HEK293 (cell line): ENCODE measurements at regions of chr11 and their contacts with region 1.

Region 1: GRCh38 chr11:65593518-65594298 is 1.9 kb downstream of the KCNK7 start:
- H3K4me3 ChIP-seq: no peak overlapping the region
- H3K27ac ChIP-seq: no peak overlapping the region
- H3K4me1 ChIP-seq: no peaks in the 10 kb centered on the region
- CTCF ChIP-seq: peak; percentile 68

Region 2: DNA sequence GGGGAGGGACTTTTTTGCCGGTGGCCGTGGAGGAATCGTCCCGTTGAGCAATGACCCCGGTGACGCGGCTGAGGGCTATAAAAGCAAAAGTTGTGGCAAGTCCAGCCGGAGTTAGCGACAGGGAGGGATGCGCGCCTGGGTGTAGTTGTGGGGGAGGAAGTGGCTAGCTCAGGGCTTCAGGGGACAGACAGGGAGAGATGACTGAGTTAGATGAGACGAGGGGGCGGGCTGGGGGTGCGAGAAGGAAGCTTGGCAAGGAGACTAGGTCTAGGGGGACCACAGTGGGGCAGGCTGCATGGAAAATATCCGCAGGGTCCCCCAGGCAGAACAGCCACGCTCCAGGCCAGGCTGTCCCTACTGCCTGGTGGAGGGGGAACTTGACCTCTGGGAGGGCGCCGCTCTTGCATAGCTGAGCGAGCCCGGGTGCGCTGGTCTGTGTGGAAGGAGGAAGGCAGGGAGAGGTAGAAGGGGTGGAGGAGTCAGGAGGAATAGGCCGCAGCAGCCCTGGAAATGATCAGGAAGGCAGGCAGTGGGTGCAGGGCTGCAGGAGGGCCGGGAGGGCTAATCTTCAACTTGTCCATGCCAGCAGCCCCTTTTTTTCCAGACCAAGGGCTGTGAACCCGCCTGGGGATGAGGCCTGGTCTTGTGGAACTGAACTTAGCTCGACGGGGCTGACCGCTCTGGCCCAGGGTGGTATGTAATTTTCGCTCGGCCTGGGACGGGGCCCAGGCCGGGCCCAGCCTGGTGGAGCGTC is 170.8 kb before region 1 on chr11 and contains the start of gene NEAT1:
- CTCF ChIA-PET with region 1: no interaction called
- POLR2A ChIA-PET with region 1: no interaction called
- H3K4me3 ChIP-seq: peak within 1 kb of the TSS; percentile 70
- H3K27ac ChIP-seq: peak within 1 kb of the TSS; percentile 98
- H3K4me1 ChIP-seq: peaks cover 6% of the 10 kb centered on the region; the same call in 1 of the 2 replicates
- CTCF ChIP-seq: peak; percentile 71

Region 3: GRCh38 chr11:65524741-65525545 is 68.8 kb before region 1 on chr11 and contains the start of gene SCYL1:
- CTCF ChIA-PET with region 1: interaction called, 11 read pairs
- POLR2A ChIA-PET with region 1: no interaction called
- H3K4me3 ChIP-seq: peak within 1 kb of the TSS; percentile 82
- H3K27ac ChIP-seq: peak within 1 kb of the TSS; percentile 81
- H3K4me1 ChIP-seq: peaks cover 4% of the 10 kb centered on the region; the same call in 1 of the 2 replicates
- CTCF ChIP-seq: no peak

Region 4: GRCh38 chr11:65558002-65558931 is 35.4 kb before region 1 on chr11 and contains the start of gene LTBP3:
- CTCF ChIA-PET with region 1: interaction called, 10 read pairs
- POLR2A ChIA-PET with region 1: no interaction called
- H3K4me3 ChIP-seq: peak within 1 kb of the TSS; percentile 52
- H3K27ac ChIP-seq: peak within 1 kb of the TSS; percentile 81
- H3K4me1 ChIP-seq: peaks cover 19% of the 10 kb centered on the region
- CTCF ChIP-seq: no peak

Region 5: GRCh38 chr11:65569973-65570918 is 23.5 kb before region 1 on chr11 and contains the start of gene ZNRD2:
- CTCF ChIA-PET with region 1: interaction called, 28 read pairs
- POLR2A ChIA-PET with region 1: interaction called, 9 read pairs
- H3K4me3 ChIP-seq: peak within 1 kb of the TSS; percentile 74
- H3K27ac ChIP-seq: peak within 1 kb of the TSS; percentile 93
- H3K4me1 ChIP-seq: peaks cover 16% of the 10 kb centered on the region; the same call in 1 of the 2 replicates
- CTCF ChIP-seq: peak; percentile 92

Region 6: GRCh38 chr11:65575568-65576231 is 18.0 kb before region 1 on chr11 and contains the start of gene EHBP1L1:
- CTCF ChIA-PET with region 1: interaction called, 28 read pairs
- POLR2A ChIA-PET with region 1: interaction called, 6 read pairs
- H3K4me3 ChIP-seq: peak within 1 kb of the TSS; percentile 31
- H3K27ac ChIP-seq: no peak within 1 kb of the TSS; the same call in 1 of the 2 replicates
- H3K4me1 ChIP-seq: peaks cover 17% of the 10 kb centered on the region; the same call in 1 of the 2 replicates
- CTCF ChIP-seq: no peak

Region 7: GRCh38 chr11:65606876-65607613 is 13.3 kb after region 1 on chr11:
- CTCF ChIA-PET with region 1: interaction called, 22 read pairs
- POLR2A ChIA-PET with region 1: interaction called, 9 read pairs
- H3K4me3 ChIP-seq: no peak overlapping the region
- H3K27ac ChIP-seq: no peak overlapping the region
- H3K4me1 ChIP-seq: no peaks in the 10 kb centered on the region
- CTCF ChIP-seq: no peak